ENCODE measurements at regions of chr19 and their contacts with region 1.

Region 1: GRCh38 chr19:10074153-10074552 is 12.0 kb upstream of the SHFL start:
- DNase-seq: peak in 8 of 9 donors; percentile 29 to 58 (median 42)
- ATAC-seq: peak; percentile 87
- H3K4me3 ChIP-seq: no peak overlapping the region
- H3K4me3 Mint-ChIP-seq: no peak overlapping the region
- H3K27ac ChIP-seq: no peak overlapping the region
- H3K27ac Mint-ChIP-seq: no peak overlapping the region
- H3K4me1 ChIP-seq: no peaks in the 10 kb centered on the region
- H3K4me1 Mint-ChIP-seq: peaks cover 0 to 2% (median 0%) of the 10 kb centered on the region in 7 donors
- H3K27me3 ChIP-seq: no peaks in the 10 kb centered on the region
- H3K27me3 Mint-ChIP-seq: peaks cover 0 to 13% (median 0%) of the 10 kb centered on the region in 5 donors

Region 2: DNA sequence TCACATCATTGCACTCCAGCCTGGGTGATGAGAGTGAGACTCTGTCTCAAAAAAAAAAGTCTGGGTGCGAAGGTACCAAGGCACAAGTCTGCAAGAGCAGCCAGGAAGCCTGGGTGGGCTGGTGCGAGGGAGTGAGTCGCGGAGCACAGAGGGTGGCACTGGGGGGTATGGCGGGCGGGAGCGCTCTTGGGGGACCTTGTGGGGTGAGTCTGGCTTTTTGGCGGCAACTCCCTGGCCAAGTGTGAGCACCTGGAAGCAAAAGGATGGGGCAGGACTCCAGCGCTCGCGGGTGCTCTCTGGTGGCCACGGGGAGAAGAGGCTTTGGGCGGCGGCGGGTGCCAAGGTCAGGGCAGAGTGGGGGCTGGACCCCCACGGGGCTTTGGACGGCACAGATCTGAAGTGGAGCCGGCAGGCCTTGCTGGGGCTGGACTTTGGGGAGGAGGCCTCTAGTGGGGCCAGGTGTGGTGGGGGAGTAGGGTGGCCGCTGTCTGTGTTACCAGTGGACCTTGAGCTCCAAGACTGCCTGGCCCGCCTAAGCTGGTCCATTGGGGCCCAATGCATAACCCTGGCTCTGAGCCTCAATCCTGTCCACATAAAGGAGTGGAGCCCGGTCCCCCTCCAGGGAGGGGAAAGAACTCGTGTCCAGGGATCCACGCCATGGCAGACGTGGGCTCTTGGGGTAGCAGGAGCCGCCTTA is 38.9 kb after region 1 on chr19:
- CTCF ChIA-PET with region 1: no interaction called
- POLR2A ChIA-PET with region 1: no interaction called
- intact Hi-C with region 1: loop called in 1 of 2 experiments (anchors 1 kb)
- DNase-seq: peak; percentile 30 to 72 (median 52)
- ATAC-seq: peak; percentile 65
- H3K4me3 ChIP-seq: peak overlapping the region; percentile 33
- H3K4me3 Mint-ChIP-seq: peak overlapping the region in 9 of 10 donors; percentile 15 to 75 (median 50)
- H3K27ac ChIP-seq: peak overlapping the region; percentile 60
- H3K27ac Mint-ChIP-seq: peak overlapping the region; percentile 51 to 92 (median 83)
- H3K4me1 ChIP-seq: peaks cover 26 to 39% of the 10 kb centered on the region in 2 donors
- H3K4me1 Mint-ChIP-seq: peaks cover 0 to 43% (median 34%) of the 10 kb centered on the region in 7 donors
- H3K27me3 ChIP-seq: no peaks in the 10 kb centered on the region
- H3K27me3 Mint-ChIP-seq: no peaks in the 10 kb centered on the region

Region 3: DNA sequence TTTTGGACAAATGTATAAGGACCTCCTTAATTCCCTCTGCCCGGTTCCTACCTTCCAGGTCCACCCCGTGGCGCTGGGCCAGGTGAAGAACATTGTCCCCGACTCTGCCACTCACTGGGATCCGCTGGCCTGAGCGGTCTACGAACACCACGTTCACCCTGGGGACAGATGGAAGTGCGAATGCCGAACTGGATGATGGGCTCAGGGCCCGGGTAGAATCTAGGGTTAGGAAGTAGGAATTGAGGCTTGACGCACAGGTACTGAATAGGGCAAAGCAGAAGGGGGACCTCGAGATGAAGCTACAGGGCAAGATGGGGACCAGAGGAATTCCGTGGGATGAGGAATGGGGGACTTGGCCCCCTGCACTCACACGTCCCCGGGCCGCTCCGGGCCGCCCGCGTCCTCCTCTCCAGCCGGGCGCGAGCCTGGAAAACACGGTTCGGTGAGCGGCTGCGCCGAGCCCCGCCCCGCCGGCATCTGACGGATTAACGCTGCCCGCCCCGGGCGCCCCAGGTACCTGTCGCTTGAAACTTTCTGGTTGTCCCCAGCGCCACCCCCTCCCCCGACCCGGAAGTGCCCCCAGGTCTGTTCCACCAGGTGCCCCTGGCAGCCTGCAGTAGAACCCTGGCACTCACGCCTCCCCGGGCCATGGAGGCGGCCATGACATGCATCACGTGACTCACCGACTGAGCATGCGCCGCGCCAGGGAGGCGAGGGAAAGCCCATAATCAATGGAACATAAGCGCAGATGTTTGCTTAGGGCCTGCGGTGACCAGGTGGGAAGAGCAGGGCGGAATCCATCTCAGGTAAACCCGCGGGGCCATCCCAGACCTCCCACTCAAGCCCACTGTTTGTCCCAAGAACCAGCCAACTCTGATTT is 241.4 kb after region 1 on chr19 and contains the start of gene FDX2:
- CTCF ChIA-PET with region 1: no interaction called
- POLR2A ChIA-PET with region 1: no interaction called
- intact Hi-C with region 1: no loop called
- DNase-seq: peak; percentile 77 to 94 (median 86)
- ATAC-seq: peak; percentile 92
- H3K4me3 ChIP-seq: peak within 1 kb of the TSS; percentile 86
- H3K4me3 Mint-ChIP-seq: peak within 1 kb of the TSS; percentile 87 to 94 (median 90)
- H3K27ac ChIP-seq: peak within 1 kb of the TSS; percentile 70
- H3K27ac Mint-ChIP-seq: peak within 1 kb of the TSS; percentile 35 to 95 (median 86)
- H3K4me1 ChIP-seq: peaks cover 6 to 13% of the 10 kb centered on the region in 2 donors
- H3K4me1 Mint-ChIP-seq: peaks cover 13 to 23% (median 16%) of the 10 kb centered on the region in 7 donors
- H3K27me3 ChIP-seq: no peaks in the 10 kb centered on the region
- H3K27me3 Mint-ChIP-seq: no peaks in the 10 kb centered on the region
- total RNA-seq, gene FDX2: 5.7 to 10.5 (median 9.3) TPM